Psoas muscle (tissue), 8 donors: ENCODE measurements at regions of chr6 and their contacts with region 1.

Region 1: DNA sequence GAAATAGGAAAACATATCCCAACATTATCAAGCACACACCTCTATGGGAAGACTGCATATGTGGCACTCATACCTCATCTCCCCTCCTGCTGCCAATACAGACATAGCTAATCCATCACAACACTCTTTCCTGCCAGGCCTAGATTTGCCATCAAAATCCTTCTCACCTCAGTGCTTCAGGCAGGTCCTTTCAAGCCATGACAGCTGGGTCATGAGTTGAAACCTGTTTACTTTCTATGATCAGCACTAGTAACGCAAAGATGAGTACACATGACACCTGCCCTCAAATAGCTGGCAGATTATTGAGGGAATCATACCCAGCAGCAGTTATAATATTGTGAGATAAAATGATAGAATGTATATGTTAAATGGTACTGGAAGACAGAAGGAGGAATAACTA is 183.1 kb downstream of the AIG1 start:
- DNase-seq: no peak
- ATAC-seq: no peak
- H3K4me3 ChIP-seq: no peak overlapping the region
- H3K27ac ChIP-seq: no peak overlapping the region
- H3K4me1 ChIP-seq: no peaks in the 10 kb centered on the region
- H3K27me3 ChIP-seq: no peaks in the 10 kb centered on the region
- CTCF ChIP-seq: no peak

Region 2: DNA sequence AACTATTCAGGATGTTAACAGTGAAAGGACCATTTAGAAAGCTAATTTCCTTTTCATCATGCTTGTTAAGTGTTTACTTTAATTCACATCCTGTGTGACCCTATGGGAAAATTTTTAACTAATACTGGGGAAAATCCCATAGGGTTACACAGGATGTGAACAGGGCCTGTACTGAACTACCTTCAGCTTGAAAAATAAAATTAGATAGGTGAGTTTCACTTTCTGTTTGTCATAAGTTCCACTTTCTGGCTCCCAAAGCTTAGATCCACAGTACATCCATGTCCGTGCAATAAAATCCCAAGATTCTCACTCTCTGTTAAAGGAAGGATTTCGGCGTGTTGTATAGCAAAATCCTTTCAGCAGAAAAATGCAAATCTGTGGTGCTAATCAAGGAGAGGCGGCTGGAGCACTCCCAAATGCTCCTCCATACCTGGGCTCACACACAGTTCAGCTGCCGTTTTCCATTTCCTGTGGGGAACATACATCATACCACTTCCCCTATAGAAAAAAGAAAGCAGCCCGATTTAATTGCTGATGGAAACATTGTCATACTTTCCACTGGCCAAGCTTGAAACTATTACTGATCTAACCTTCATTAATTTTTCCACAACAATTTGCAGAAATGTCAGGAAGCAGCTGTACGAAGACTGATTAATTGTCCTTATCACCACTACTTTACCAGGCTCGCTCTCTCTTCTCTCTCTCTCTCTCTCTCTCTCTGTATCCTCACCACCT is 424.0 kb before region 1 on chr6:
- intact Hi-C with region 1: no loop called
- DNase-seq: no peak
- ATAC-seq: no peak
- H3K4me3 ChIP-seq: peak overlapping the region; percentile 54
- H3K27ac ChIP-seq: peak overlapping the region; percentile 69
- H3K4me1 ChIP-seq: peaks cover 63% of the 10 kb centered on the region
- H3K27me3 ChIP-seq: no peaks in the 10 kb centered on the region
- CTCF ChIP-seq: no peak

Region 3: DNA sequence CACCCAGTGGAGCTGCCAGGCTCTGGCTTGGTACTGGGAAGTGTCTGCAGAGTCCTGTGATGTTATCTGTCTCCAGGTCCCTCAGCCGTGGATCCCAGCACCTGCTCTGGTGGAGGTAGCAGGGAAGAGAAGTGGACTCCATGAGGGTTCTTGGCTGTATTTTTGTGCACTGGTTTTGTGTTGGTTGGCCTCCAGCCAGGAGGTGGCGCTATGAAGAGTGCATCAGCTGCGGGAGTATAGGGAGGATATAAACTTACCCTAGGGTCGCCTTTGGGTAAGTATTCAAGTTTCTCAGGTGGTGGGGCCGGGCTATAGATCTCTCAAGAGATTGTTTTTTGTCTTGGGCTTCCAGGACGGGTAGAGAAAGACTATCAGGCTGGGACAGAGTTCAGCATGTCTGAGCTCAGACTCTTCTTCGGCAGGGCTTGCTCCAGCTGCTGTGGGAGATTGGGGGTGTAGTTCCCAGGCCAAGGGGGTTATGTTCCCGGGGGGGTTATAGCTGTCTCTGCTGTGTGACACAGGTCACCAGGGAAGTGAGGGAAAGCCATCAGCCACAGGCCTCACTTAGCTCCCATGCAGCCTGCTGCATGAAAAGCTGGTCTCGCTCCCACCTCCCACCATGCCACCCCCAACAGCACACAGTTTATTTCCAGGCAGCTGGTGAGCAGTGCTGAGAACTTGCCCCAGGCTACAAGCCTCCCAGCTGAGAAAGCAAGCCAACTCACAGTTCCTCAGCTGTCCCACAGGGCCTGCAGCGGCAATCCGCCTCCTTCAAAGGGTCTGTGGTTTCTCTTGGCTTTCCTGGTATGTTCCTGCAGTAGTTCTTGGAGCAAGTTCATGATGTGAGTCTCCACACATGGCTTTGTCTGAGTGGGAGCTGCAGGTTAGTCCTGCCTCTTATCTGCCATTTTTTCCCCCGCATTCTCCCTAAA is 67.4 kb before region 1 on chr6:
- intact Hi-C with region 1: loop called in 1 of 2 experiments (anchors 1 kb)
- DNase-seq: no peak
- ATAC-seq: no peak
- H3K4me3 ChIP-seq: no peak overlapping the region
- H3K27ac ChIP-seq: no peak overlapping the region
- H3K4me1 ChIP-seq: peaks cover 7% of the 10 kb centered on the region
- H3K27me3 ChIP-seq: no peaks in the 10 kb centered on the region
- CTCF ChIP-seq: no peak

Region 4: GRCh38 chr6:143196525-143197215 is 47.1 kb before region 1 on chr6:
- intact Hi-C with region 1: no loop called
- DNase-seq: no peak
- ATAC-seq: no peak
- H3K4me3 ChIP-seq: no peak overlapping the region
- H3K27ac ChIP-seq: no peak overlapping the region
- H3K4me1 ChIP-seq: no peaks in the 10 kb centered on the region
- H3K27me3 ChIP-seq: no peaks in the 10 kb centered on the region
- CTCF ChIP-seq: no peak

Region 5: GRCh38 chr6:143286251-143286795 is 42.5 kb after region 1 on chr6:
- intact Hi-C with region 1: no loop called
- DNase-seq: no peak
- ATAC-seq: no peak
- H3K4me3 ChIP-seq: no peak overlapping the region
- H3K27ac ChIP-seq: no peak overlapping the region
- H3K4me1 ChIP-seq: no peaks in the 10 kb centered on the region
- H3K27me3 ChIP-seq: no peaks in the 10 kb centered on the region
- CTCF ChIP-seq: no peak

Region 6: GRCh38 chr6:144690133-144690532 is 1446.3 kb after region 1 on chr6:
- intact Hi-C with region 1: no loop called
- DNase-seq: no peak
- ATAC-seq: no peak
- H3K4me3 ChIP-seq: no peak overlapping the region
- H3K27ac ChIP-seq: no peak overlapping the region
- H3K4me1 ChIP-seq: no peaks in the 10 kb centered on the region
- H3K27me3 ChIP-seq: no peaks in the 10 kb centered on the region
- CTCF ChIP-seq: no peak